ENCODE measurements at regions of chr12 and their contacts with region 1.

Region 1: GRCh38 chr12:54201001-54201794 is 12.4 kb upstream of the SMUG1 start:
- DNase-seq: peak; percentile 51 to 53
- H3K4me3 ChIP-seq: no peak overlapping the region
- H3K27ac ChIP-seq: no peak overlapping the region
- H3K4me1 ChIP-seq: no peaks in the 10 kb centered on the region
- H3K27me3 ChIP-seq: no peaks in the 10 kb centered on the region
- CTCF ChIP-seq: peak; percentile 89 to 97 (median 95)
- POLR2A ChIP-seq: no peak

Region 2: GRCh38 chr12:54005853-54006686 is 195.1 kb before region 1 on chr12:
- intact Hi-C with region 1: loop called (anchors 5 kb)
- DNase-seq: peak; percentile 86 to 90
- H3K4me3 ChIP-seq: peak overlapping the region in 1 of 3 donors; percentile 10
- H3K27ac ChIP-seq: no peak overlapping the region
- H3K4me1 ChIP-seq: peaks cover 0 to 19% of the 10 kb centered on the region in 2 donors
- H3K27me3 ChIP-seq: peaks cover 69% of the 10 kb centered on the region
- CTCF ChIP-seq: peak; percentile 71 to 95 (median 90)
- POLR2A ChIP-seq: no peak